ENCODE measurements at regions of chr6 and their contacts with region 1.

Region 1: GRCh38 chr6:41523915-41524633 is 22.1 kb upstream of the FOXP4 start:
- DNase-seq: no peak
- ATAC-seq: no peak
- H3K4me3 ChIP-seq: no peak overlapping the region
- H3K27ac ChIP-seq: no peak overlapping the region
- H3K4me1 ChIP-seq: no peaks in the 10 kb centered on the region
- H3K27me3 ChIP-seq: no peaks in the 10 kb centered on the region; the same call in 1 of the 2 replicates
- CTCF ChIP-seq: no peak

Region 2: DNA sequence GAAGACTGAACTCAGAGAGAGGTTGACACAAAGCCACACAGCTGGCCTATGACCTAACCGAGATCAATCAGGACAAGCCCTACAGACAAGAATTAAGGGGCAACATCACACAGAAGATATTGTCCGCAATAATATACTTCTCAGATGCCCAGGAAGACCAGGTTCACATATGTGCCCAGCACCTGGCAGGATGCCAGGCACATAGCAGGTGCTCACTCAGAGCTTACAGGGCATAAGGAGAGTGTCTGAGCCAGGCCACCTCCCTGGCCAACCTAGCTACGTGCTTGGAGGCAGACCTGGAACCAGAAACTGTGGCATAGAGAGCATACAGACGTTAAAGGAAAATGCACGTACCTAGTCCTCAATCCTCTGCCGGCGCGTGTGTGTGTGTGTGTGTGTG is 849.9 kb before region 1 on chr6:
- CTCF ChIA-PET with region 1: no interaction called
- POLR2A ChIA-PET with region 1: interaction called, 15 read pairs
- in situ Hi-C with region 1: no loop called
- intact Hi-C with region 1: no loop called
- DNase-seq: no peak
- ATAC-seq: no peak
- H3K4me3 ChIP-seq: no peak overlapping the region
- H3K27ac ChIP-seq: no peak overlapping the region
- H3K4me1 ChIP-seq: no peaks in the 10 kb centered on the region
- H3K27me3 ChIP-seq: no peaks in the 10 kb centered on the region; the same call in 1 of the 2 replicates
- CTCF ChIP-seq: no peak

Region 3: DNA sequence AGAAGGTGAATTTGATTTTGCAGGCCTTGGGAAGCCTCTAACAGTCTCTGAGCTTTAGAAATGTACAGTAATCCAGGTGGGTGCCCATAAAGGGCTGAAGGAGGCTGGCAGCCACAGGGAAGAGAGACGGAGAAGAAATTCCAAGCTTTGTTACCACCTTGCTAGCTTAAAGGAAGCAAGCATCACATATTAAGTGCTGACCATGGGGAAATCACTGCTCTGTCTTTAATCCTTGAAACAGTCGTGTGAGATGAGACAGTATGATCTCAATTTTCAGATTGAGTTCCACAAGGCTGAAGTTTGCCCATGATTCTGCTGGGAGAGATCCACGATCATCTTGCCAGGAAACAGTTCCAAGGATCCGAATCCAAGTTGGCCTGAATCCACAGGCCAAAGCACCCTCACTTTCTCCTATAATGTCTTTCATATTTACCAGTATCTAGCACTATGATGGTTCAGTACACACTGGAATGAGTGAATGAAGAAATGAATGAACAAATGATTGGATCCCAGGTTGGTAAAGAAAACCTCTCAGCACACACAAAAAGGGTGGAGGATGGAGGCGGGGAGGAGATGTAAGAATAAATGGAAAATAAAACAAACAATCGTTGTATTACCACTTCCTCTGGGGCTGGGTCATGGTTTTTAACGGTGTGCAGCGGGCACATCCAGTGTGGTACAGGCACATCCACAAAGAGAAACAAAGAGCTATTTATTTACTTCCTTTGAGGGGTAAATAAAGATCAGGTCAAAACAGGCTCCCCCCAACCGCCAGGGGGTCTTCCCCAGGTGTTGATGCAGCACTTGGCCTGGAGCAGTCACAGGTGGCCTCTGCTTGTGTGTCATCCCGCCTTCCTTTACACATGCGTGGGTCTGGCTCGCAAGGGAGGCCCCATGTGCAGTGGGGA is 498.0 kb after region 1 on chr6:
- CTCF ChIA-PET with region 1: no interaction called
- POLR2A ChIA-PET with region 1: no interaction called
- in situ Hi-C with region 1: no loop called
- intact Hi-C with region 1: no loop called
- DNase-seq: no peak
- ATAC-seq: no peak
- H3K4me3 ChIP-seq: no peak overlapping the region
- H3K27ac ChIP-seq: no peak overlapping the region
- H3K4me1 ChIP-seq: 0 out of 2 replicates have a peak, but pooled peaks cover 2% of the 10 kb centered on the region
- H3K27me3 ChIP-seq: no peaks in the 10 kb centered on the region
- CTCF ChIP-seq: no peak